ENCODE measurements at regions of chr20 and their contacts with region 1.

Region 1: DNA sequence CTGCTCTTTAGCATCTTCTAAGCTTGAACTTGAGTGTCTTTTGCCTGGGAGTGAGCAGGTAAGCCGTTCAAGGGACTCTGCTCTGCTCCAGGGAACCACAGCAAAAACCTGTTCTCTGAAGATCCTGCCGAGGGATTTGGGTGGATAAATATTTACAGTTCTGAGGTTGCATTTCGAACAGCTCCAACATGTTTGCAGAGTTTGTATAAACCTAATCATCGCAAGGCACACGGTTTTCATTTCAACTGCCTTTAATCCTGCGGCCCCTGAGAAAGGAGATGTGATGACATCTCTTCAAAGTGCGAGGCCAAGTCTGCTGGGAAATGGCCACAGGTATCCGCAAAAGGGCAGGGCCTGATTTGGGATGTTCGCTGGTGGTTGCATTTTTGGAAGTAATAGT is 293.4 kb downstream of the TFAP2C start:
- DNase-seq: no peak
- H3K4me3 ChIP-seq: no peak overlapping the region
- H3K27ac ChIP-seq: no peak overlapping the region
- H3K4me1 ChIP-seq: peaks cover 0 to 13% (median 8%) of the 10 kb centered on the region in 4 donors
- H3K27me3 ChIP-seq: peaks cover 0 to 33% of the 10 kb centered on the region in 2 donors
- CTCF ChIP-seq: no peak

Region 2: DNA sequence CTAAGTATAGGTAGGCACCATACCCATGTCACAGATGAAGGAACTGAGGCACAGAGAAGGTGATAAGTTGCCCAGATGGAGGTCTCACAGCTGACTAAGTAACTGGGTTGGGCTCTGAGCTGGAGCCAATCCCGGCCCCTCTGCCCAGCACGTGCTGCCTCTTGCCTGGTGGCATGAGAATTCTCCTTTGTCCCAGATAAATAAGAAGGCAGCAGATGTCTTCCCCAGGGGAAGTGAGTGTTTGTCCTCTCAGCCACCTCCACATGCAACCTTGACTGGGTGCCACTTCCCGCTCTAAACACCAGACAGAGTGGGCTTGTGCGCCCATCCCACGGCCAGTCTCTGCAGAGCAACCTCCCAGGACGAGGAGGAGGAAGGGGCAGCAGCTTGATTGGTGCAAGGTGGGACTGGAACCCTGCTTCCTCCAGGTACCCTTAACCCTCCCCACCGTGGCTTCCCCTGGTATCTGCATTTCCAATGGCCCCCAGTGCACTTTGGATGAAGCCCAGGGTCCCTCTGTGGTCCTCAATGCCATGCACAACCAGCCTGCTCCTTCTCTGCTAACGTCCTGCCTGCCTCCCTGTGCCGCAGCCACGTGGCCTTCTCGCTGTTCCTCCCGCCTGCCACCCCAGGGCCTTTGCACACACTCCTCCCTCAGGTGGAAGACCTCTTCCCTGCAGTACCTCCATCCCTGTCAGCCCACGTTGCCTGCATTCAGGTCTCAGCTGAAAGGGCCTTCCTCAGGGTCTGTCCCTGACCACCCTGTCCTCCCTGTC is 242.2 kb after region 1 on chr20:
- intact Hi-C with region 1: loop called (anchors 2 kb)
- DNase-seq: no peak
- H3K4me3 ChIP-seq: no peak overlapping the region
- H3K27ac ChIP-seq: no peak overlapping the region
- H3K4me1 ChIP-seq: no peaks in the 10 kb centered on the region
- H3K27me3 ChIP-seq: peaks cover 0 to 6% of the 10 kb centered on the region in 2 donors
- CTCF ChIP-seq: no peak

Region 3: DNA sequence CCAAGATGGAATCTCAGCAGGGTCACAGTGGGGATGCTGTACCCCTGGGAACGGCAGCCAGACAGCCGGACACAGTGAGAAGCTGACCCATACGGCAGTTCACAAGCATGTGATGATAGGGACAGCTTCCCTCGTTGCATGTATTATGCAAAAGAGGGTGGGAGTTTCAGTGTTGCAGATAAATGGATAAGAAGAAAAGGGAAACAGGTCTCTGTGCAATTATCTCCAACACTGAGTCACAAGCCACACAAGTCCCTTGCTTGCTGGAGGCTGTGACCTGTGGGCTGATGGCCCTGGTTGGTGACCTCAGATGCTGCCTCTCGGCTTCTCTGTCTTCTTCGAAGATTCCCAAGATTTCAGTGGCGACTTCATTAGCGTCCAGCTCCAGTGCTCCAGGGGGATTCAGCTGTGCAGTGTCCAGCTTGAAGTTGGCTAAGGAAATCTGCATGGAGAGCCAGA is 386.3 kb after region 1 on chr20:
- intact Hi-C with region 1: no loop called
- DNase-seq: peak in 1 of 2 donors; percentile 27
- H3K4me3 ChIP-seq: no peak overlapping the region
- H3K27ac ChIP-seq: no peak overlapping the region
- H3K4me1 ChIP-seq: no peaks in the 10 kb centered on the region
- H3K27me3 ChIP-seq: peaks cover 0 to 29% of the 10 kb centered on the region in 2 donors
- CTCF ChIP-seq: no peak

Region 4: DNA sequence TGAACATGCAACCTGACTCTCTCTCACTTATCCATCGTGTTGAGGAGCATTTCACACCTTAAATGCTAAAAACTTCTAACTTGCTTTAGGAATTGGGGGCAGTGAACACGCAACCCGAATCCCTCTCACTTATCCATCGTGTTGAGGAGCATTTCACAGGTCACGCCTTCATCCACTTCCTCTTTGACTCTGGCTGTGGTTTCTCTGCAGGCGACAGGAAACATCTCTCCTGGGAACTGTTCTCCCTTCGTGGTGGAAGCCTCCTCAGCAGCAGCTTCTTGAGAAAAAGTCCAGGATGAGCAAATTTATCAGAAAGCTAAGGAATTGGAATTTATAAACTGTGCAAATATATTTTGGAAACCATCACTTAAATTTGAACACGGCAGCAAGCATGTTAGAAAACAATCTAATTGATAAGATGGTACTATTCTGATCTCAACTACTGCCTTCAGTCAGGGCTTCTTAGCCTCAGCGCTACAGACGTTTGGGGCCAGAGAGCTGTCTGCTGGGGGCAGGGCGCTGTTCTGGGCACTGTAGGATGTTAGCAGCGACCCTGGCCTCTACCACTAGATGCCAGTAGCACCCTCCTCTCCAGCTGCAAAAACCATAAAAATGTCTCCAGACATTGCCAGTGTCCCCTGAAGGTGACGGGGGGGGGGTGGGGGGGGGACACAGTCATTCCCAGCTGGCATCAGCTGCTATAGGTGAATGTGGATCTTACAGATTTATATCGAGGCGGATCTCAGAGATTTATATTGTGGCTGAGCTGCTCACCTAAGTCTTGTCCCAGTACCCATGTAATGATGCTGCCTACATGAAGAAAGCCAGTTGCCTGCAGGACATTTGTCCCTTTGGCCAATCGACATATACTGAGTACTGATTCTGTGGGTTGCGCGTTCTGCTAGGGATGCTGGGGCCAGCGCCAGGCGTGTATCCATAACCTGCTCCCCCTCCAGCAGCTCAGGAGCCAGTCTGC is 576.2 kb after region 1 on chr20:
- intact Hi-C with region 1: no loop called
- DNase-seq: no peak
- H3K4me3 ChIP-seq: no peak overlapping the region
- H3K27ac ChIP-seq: no peak overlapping the region
- H3K4me1 ChIP-seq: peaks cover 0 to 13% (median 8%) of the 10 kb centered on the region in 4 donors
- H3K27me3 ChIP-seq: peaks cover 0 to 14% of the 10 kb centered on the region in 2 donors
- CTCF ChIP-seq: no peak